ENCODE measurements at regions of chr2 and their contacts with region 1.

Region 1: GRCh38 chr2:229852565-229852964 is 69.2 kb downstream of the TRIP12 start:
- DNase-seq: peak in 4 of 5 donors; percentile 38 to 56 (median 46)
- ATAC-seq: peak; percentile 55 to 94 (median 85)
- H3K4me3 ChIP-seq: no peak overlapping the region
- H3K27ac ChIP-seq: peak overlapping the region in 6 of 12 donors; percentile 9 to 70 (median 26)
- H3K4me1 ChIP-seq: peaks cover 0 to 55% (median 24%) of the 10 kb centered on the region in 12 donors
- H3K27me3 ChIP-seq: no peaks in the 10 kb centered on the region
- CTCF ChIP-seq: no peak
- POLR2A ChIP-seq: no peak

Region 2: GRCh38 chr2:229104974-229105387 is 747.6 kb before region 1 on chr2:
- intact Hi-C with region 1: loop called in 1 of 10 experiments (anchors 10 kb)
- DNase-seq: no peak
- ATAC-seq: no peak
- H3K4me3 ChIP-seq: no peak overlapping the region
- H3K27ac ChIP-seq: no peak overlapping the region
- H3K4me1 ChIP-seq: peaks cover 0 to 12% (median 0%) of the 10 kb centered on the region in 12 donors
- H3K27me3 ChIP-seq: no peaks in the 10 kb centered on the region
- CTCF ChIP-seq: no peak
- POLR2A ChIP-seq: no peak

Region 3: DNA sequence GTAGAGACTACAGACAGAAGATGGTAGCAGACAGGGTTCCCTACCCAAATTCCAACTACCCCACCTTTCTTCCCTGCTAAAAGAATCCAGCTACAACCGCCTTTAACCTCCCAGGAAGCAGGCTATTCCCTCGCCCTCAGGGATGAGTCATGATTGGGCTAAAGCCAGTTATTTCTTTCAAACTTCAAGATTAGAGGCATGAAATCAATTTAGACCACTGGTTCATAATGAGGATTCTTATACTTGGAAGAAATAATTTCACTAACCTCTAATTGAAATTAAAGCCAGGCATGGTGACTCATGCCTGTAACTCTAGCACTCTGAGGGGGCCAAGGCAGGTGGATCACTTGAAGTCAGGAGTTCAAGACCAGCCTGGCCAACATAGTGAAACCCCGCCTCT is 49.3 kb after region 1 on chr2:
- intact Hi-C with region 1: loop called in 1 of 10 experiments (anchors 10 kb)
- DNase-seq: no peak
- ATAC-seq: peak in 3 of 4 donors; percentile 53 to 62 (median 55)
- H3K4me3 ChIP-seq: no peak overlapping the region
- H3K27ac ChIP-seq: no peak overlapping the region
- H3K4me1 ChIP-seq: peaks cover 4 to 47% (median 23%) of the 10 kb centered on the region in 12 donors
- H3K27me3 ChIP-seq: no peaks in the 10 kb centered on the region
- CTCF ChIP-seq: no peak
- POLR2A ChIP-seq: no peak

Region 4: GRCh38 chr2:230124235-230124634 is 271.7 kb after region 1 on chr2:
- intact Hi-C with region 1: no loop called
- DNase-seq: no peak
- ATAC-seq: no peak
- H3K4me3 ChIP-seq: peak overlapping the region in 1 of 12 donors; percentile 7
- H3K27ac ChIP-seq: peak overlapping the region in 1 of 12 donors; percentile 7
- H3K4me1 ChIP-seq: peaks cover 0 to 36% (median 4%) of the 10 kb centered on the region in 12 donors
- H3K27me3 ChIP-seq: no peaks in the 10 kb centered on the region
- CTCF ChIP-seq: no peak
- POLR2A ChIP-seq: no peak